ENCODE measurements at regions of chr13 and their contacts with region 1.

Region 1: DNA sequence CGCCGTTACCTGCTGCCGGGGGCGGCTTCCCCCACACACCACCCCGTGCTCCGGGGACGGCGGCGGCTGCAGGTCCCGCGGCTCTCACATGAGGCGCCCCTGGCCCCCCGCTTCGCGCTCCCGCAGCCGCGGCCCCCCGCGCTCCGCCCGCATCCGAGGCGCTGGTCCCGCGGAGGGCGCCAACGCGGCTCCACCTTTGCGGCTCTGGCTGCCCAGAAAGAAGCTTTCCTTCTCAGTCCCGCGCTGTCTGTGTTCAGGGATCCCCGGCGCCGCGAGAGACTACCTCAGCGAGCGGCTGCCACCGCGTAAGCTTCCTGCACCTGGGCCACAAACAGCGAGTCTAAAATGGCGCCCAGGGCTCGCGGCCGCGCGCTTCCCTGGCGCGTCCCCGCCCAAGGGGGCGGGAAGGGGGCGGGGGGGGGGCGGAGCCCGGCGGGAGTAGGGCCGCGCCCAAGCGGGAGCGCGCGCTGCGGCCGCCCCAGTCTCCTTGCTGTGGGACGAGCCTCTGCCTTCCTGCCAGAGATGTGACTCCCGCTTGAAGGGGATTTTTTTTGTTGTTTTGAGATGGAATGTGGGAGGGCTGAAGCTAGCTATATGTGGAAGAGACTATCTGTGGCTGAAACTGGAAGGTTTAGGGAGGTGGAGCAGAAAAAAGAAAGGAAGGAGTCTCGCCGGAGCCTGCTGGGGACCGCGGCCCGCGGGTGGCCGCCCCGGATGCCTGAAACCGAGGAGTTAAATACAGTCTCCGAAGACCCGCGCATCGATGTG is at the start of gene FBXL3:
- DNase-seq: peak; percentile 88
- H3K4me3 Mint-ChIP-seq: peak within 1 kb of the TSS; percentile 95
- H3K27ac Mint-ChIP-seq: peak within 1 kb of the TSS; percentile 98
- H3K4me1 Mint-ChIP-seq: peaks cover 48% of the 10 kb centered on the region
- H3K27me3 Mint-ChIP-seq: peaks cover 2% of the 10 kb centered on the region
- total RNA-seq, gene FBXL3: 38.6 to 43.3 TPM

Region 2: GRCh38 chr13:76886292-76887075 is 140.5 kb before region 1 on chr13 and contains the start of gene KCTD12:
- CTCF ChIA-PET with region 1: interaction called, 3 read pairs
- POLR2A ChIA-PET with region 1: interaction called, 17 read pairs
- DNase-seq: peak; percentile 72
- H3K4me3 Mint-ChIP-seq: peak within 1 kb of the TSS; percentile 84
- H3K27ac Mint-ChIP-seq: peak within 1 kb of the TSS; percentile 71
- H3K4me1 Mint-ChIP-seq: peaks cover 31% of the 10 kb centered on the region
- H3K27me3 Mint-ChIP-seq: peaks cover 38% of the 10 kb centered on the region
- total RNA-seq, gene KCTD12: 7.1 to 7.3 TPM

Region 3: DNA sequence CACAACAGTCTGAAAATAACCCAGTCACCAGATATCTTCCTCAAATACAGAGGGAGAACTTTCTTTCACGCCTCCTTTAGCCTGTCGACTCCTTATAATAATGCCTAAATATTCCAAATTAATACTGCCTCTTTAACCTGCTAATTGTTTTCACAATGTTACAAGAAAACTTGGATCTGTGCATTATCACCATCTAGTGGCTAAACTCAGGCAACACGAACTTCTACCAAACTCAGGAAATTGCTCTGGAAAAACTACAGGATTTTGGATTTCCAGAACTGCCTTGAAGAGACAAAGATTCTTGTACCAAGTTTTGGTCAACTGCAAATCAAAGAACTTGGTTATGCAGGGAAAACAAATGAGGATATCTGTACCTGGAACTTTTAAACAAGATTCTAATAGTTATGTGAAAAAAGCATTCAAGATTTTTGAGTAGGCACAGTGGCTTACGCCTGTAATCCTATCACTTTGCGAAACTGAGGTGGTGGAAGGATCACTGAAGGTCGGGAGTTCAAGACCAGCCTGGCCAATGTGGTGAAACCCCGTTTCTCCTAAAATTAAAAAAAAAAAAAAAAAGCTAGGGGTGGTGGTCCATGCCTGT is 24.3 kb before region 1 on chr13:
- CTCF ChIA-PET with region 1: interaction called, 4 read pairs
- POLR2A ChIA-PET with region 1: interaction called, 10 read pairs
- DNase-seq: no peak
- H3K4me3 Mint-ChIP-seq: no peak overlapping the region
- H3K27ac Mint-ChIP-seq: no peak overlapping the region
- H3K4me1 Mint-ChIP-seq: peaks cover 19% of the 10 kb centered on the region
- H3K27me3 Mint-ChIP-seq: no peaks in the 10 kb centered on the region

Region 4: GRCh38 chr13:77042566-77043178 is 15.7 kb after region 1 on chr13:
- CTCF ChIA-PET with region 1: interaction called, 4 read pairs
- POLR2A ChIA-PET with region 1: interaction called, 18 read pairs
- DNase-seq: no peak
- H3K4me3 Mint-ChIP-seq: no peak overlapping the region
- H3K27ac Mint-ChIP-seq: no peak overlapping the region
- H3K4me1 Mint-ChIP-seq: peaks cover 1% of the 10 kb centered on the region
- H3K27me3 Mint-ChIP-seq: no peaks in the 10 kb centered on the region

Region 5: DNA sequence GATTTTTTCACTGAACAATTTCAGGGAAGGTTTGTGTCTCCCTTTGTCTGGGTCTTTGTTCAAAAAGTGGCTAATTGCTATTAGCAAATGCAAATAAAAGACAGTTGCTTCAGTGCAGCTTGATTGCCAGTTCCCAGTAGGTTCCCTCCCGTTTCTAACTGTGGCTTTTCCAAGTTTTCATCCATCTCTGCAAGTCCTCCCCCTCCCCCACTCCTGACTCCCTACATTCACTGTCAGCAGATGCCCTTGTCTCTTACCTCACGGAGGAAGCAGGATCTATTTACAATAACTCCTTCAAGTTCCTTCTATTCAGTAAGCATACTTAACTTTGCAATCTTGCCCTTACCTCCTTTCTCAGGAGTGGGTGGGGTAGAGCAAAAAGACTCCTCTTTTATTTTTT is 453.1 kb after region 1 on chr13:
- CTCF ChIA-PET with region 1: interaction called, 16 read pairs
- POLR2A ChIA-PET with region 1: interaction called, 9 read pairs
- DNase-seq: no peak
- H3K4me3 Mint-ChIP-seq: no peak overlapping the region
- H3K27ac Mint-ChIP-seq: no peak overlapping the region
- H3K4me1 Mint-ChIP-seq: peaks cover 14% of the 10 kb centered on the region
- H3K27me3 Mint-ChIP-seq: peaks cover 12% of the 10 kb centered on the region